K562 (cell line): ENCODE measurements at regions of chr11 and their contacts with region 1.

Region 1: GRCh38 chr11:116691771-116692177 is 81.0 kb downstream of the BUD13 start:
- DNase-seq: peak; percentile 64 to 86 (median 82)
- ATAC-seq: peak; percentile 96
- H3K4me3 ChIP-seq: no peak overlapping the region
- H3K27ac ChIP-seq: no peak overlapping the region
- H3K4me1 ChIP-seq: no peaks in the 10 kb centered on the region
- H3K27me3 ChIP-seq: peaks cover 0 to 12% of the 10 kb centered on the region in 2 experiments; a peak in 1 of 5 replicates
- CTCF ChIP-seq: peak; percentile 79 to 92 (median 85)
- EP300 ChIP-seq: no peak
- POLR2A ChIP-seq: no peak
- RAD21 ChIP-seq: peak; percentile 65 to 78

Region 2: DNA sequence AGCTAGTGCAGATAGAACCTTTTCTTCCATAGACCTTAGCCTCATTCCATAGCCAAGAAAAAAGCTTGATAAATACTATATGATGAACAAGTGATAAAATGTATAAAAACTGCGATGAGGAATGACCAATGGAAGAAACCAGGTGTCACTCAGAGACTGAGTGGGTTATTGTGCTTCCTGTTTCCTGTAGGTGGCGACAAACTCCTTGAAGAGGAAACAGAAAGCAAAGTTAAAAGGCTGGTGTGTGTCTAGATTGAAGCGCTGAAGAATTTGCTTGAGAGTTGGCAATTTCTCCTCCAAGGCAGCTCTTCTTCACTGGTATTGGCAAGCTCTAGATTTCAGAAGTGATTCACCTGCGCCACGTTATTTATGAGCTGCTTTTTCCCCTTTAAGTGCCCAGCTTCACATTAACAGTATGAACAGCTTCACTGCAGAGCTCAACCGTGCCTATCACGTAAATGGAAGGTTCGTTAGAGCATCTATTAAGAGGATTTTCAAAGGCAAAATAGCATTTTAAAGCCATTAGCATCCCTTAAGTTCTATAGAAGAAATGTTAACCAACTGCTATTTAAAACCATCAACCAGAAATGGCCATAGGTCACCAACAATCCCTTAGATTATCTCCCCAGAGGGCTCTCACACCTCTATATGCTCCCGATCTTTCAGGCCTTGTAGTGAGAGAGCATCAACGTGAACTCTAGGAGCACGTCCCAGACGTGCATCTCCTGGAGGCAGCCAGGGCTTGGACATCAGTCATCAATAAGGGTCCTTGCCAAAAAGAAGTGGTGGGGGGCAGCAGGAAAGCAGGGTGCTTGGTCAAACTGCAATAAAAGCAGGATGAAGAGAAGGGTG is 1367.0 kb before region 1 on chr11:
- CTCF ChIA-PET with region 1: no interaction called
- POLR2A ChIA-PET with region 1: no interaction called
- in situ Hi-C with region 1: loop called (anchors 25 kb)
- intact Hi-C with region 1: loop called (anchors 10 kb)
- DNase-seq: peak; percentile 34 to 49 (median 44)
- ATAC-seq: peak; percentile 92
- H3K4me3 ChIP-seq: no peak overlapping the region
- H3K27ac ChIP-seq: no peak overlapping the region
- H3K4me1 ChIP-seq: no peaks in the 10 kb centered on the region
- H3K27me3 ChIP-seq: no peaks in the 10 kb centered on the region
- CTCF ChIP-seq: peak; percentile 65 to 85 (median 70)
- EP300 ChIP-seq: no peak
- POLR2A ChIP-seq: no peak
- RAD21 ChIP-seq: peak; percentile 72 to 74

Region 3: DNA sequence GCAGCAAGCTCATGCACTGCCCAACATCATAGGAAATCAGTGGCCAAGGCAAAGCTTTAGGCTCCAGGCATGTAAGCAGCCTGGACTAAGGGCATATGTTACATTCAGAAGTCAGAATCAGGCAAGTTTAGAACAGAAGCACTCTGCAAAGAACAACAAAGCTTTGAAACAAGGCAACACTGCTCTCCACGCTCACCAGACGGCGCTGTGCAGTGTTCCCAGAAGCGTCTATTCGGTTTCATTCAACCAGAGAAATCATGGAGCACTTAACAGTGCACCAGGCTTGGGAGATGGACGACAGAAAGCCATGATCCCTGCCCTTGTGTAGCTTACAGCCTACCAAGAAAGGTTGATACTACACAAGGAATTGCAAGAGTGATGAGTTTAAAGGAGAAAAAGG is 474.8 kb before region 1 on chr11:
- CTCF ChIA-PET with region 1: interaction called, 4 read pairs
- POLR2A ChIA-PET with region 1: interaction called, 3 read pairs
- in situ Hi-C with region 1: no loop called
- intact Hi-C with region 1: loop called (anchors 1 kb)
- DNase-seq: peak; percentile 20 to 55 (median 36)
- ATAC-seq: peak; percentile 89
- H3K4me3 ChIP-seq: no peak overlapping the region
- H3K27ac ChIP-seq: no peak overlapping the region
- H3K4me1 ChIP-seq: no peaks in the 10 kb centered on the region
- H3K27me3 ChIP-seq: peaks cover 0 to under 1% of the 10 kb centered on the region in 2 experiments; a peak in 2 of 5 replicates
- CTCF ChIP-seq: peak; percentile 72 to 79 (median 77)
- EP300 ChIP-seq: no peak
- POLR2A ChIP-seq: no peak
- RAD21 ChIP-seq: peak in 1 of 2 experiments; percentile 55; a peak in 3 of 4 replicates

Region 4: GRCh38 chr11:116357784-116358544 is 333.8 kb before region 1 on chr11:
- CTCF ChIA-PET with region 1: no interaction called
- POLR2A ChIA-PET with region 1: no interaction called
- in situ Hi-C with region 1: no loop called
- intact Hi-C with region 1: loop called (anchors 5 kb)
- DNase-seq: peak; percentile 68 to 87 (median 80)
- ATAC-seq: peak; percentile 100
- H3K4me3 ChIP-seq: no peak overlapping the region
- H3K27ac ChIP-seq: no peak overlapping the region
- H3K4me1 ChIP-seq: peaks cover 0 to 6% of the 10 kb centered on the region in 2 experiments; a peak in 1 of 5 replicates
- H3K27me3 ChIP-seq: peaks cover 0 to 46% of the 10 kb centered on the region in 2 experiments; a peak in 4 of 5 replicates
- CTCF ChIP-seq: peak; percentile 84 to 95 (median 92)
- EP300 ChIP-seq: no peak
- POLR2A ChIP-seq: no peak
- RAD21 ChIP-seq: peak; percentile 54 to 67; a peak in 3 of 4 replicates

Region 5: GRCh38 chr11:116513894-116514293 is 177.9 kb before region 1 on chr11:
- CTCF ChIA-PET with region 1: interaction called, 10 read pairs
- POLR2A ChIA-PET with region 1: no interaction called
- in situ Hi-C with region 1: loop called (anchors 10 kb)
- intact Hi-C with region 1: loop called (anchors 1 kb)
- DNase-seq: peak; percentile 53 to 66 (median 64)
- ATAC-seq: peak; percentile 91
- H3K4me3 ChIP-seq: no peak overlapping the region
- H3K27ac ChIP-seq: no peak overlapping the region
- H3K4me1 ChIP-seq: no peaks in the 10 kb centered on the region
- H3K27me3 ChIP-seq: peaks cover 0 to 9% of the 10 kb centered on the region in 2 experiments; a peak in 3 of 5 replicates
- CTCF ChIP-seq: peak; percentile 59 to 73 (median 66)
- EP300 ChIP-seq: no peak
- POLR2A ChIP-seq: no peak
- RAD21 ChIP-seq: peak in 1 of 2 experiments; percentile 48; a peak in 3 of 4 replicates

Region 6: GRCh38 chr11:116680349-116681125 is 11.2 kb before region 1 on chr11:
- CTCF ChIA-PET with region 1: no interaction called
- POLR2A ChIA-PET with region 1: no interaction called
- in situ Hi-C with region 1: no loop called
- intact Hi-C with region 1: no loop called
- DNase-seq: no peak
- ATAC-seq: no peak
- H3K4me3 ChIP-seq: no peak overlapping the region
- H3K27ac ChIP-seq: no peak overlapping the region
- H3K4me1 ChIP-seq: no peaks in the 10 kb centered on the region
- H3K27me3 ChIP-seq: no peaks in the 10 kb centered on the region
- CTCF ChIP-seq: no peak
- EP300 ChIP-seq: no peak
- POLR2A ChIP-seq: no peak
- RAD21 ChIP-seq: no peak